Naive thymus-derived CD4-positive, alpha-beta T cell (primary cell): ENCODE measurements at regions of chr15 and their contacts with region 1.

Region 1: DNA sequence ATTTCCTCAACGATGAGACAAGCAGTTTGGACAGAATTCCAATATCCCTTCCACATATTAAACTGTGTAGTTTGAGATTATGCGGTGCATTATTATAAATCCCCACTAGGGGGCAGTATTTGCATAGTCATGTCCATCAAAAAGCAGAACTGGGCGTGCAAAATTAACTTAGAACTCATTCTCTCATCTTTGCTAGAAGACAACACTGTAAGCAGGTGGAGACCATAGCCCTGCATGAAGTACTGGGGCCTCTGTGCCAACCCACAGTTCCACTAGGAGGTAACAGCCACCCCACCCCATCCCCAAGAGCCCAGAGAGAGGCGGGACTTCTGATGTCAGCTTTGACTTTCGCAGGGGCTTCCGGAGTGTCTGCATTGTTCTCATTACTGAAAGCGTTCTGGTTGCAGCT is 106.6 kb upstream of the TMC3 start:
- DNase-seq: peak in 8 of 9 donors; percentile 10 to 62 (median 48)
- ATAC-seq: peak; percentile 76
- H3K4me3 ChIP-seq: no peak overlapping the region
- H3K4me3 Mint-ChIP-seq: peak overlapping the region in 5 of 10 donors; percentile 21 to 66 (median 53)
- H3K27ac ChIP-seq: no peak overlapping the region
- H3K27ac Mint-ChIP-seq: no peak overlapping the region
- H3K4me1 ChIP-seq: no peaks in the 10 kb centered on the region
- H3K4me1 Mint-ChIP-seq: peaks cover 0 to 3% (median 0%) of the 10 kb centered on the region in 7 donors
- H3K27me3 ChIP-seq: no peaks in the 10 kb centered on the region
- H3K27me3 Mint-ChIP-seq: peaks cover 0 to 9% (median 0%) of the 10 kb centered on the region in 5 donors

Region 2: DNA sequence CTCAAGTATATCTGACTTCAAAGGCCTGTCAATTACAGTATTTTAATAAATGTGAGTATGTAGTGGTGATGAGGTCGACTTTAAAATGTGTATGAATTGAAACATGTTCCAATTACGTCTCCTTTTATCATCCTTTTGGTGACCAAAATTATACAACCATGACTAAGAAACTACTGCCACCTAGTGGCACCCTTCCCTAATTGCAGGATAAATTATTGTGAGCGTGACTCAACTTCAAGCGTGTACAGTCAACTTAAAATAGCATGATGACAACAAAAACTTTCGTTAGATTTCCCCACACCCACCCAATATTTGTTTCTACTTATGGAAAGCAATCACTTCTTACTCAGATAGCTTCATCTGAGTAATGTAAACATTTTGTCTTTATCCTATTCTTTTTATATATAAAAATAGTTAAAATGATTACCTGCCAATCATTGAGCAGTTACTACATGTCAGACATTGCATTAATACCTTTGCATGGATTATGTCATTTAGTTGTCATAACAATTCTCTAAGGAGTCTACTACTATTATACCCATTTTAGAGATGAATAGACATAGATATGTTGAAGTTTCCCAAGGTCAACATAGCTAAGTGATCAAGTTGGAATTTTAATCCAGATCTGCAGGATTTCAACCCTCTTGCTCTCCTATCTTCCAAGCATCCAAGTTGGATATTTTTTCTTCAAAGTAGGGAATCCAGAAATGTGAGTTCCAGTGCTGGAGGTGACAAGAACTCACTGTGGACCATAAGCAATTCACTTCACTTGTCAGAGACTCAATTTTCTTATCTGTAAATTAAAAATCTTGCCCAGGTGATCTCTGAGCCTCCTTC is 459.2 kb after region 1 on chr15:
- CTCF ChIA-PET with region 1: no interaction called
- POLR2A ChIA-PET with region 1: no interaction called
- intact Hi-C with region 1: loop called in 1 of 2 experiments (anchors 2 kb)
- DNase-seq: peak in 3 of 9 donors; percentile 2 to 4 (median 2)
- ATAC-seq: no peak
- H3K4me3 ChIP-seq: no peak overlapping the region
- H3K4me3 Mint-ChIP-seq: no peak overlapping the region
- H3K27ac ChIP-seq: no peak overlapping the region
- H3K27ac Mint-ChIP-seq: no peak overlapping the region
- H3K4me1 ChIP-seq: no peaks in the 10 kb centered on the region
- H3K4me1 Mint-ChIP-seq: no peaks in the 10 kb centered on the region
- H3K27me3 ChIP-seq: no peaks in the 10 kb centered on the region
- H3K27me3 Mint-ChIP-seq: peaks cover 5 to 40% (median 28%) of the 10 kb centered on the region in 5 donors

Region 3: DNA sequence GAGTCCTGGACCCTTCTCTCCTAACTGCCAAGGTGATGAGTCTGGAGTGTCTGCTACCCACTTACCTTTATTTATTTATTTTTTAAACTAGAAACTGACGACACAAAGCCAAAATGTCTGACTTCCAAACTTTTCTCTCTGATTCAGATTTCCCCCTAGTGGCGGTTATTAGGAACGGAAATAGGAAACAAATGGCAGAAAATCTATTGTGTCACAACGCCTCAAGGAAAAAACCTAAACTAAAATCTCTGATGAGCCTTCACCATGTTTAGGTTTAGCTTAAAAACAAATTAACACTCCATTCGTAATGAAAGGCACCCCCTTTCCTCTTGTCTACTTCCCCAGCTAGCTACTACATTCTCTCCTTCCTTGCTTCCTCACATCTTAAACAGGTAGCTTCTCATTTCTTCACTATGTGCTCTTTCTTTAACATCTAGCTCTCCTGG is 659.2 kb after region 1 on chr15:
- CTCF ChIA-PET with region 1: interaction called, 4 read pairs
- POLR2A ChIA-PET with region 1: no interaction called
- intact Hi-C with region 1: loop called in 1 of 2 experiments (anchors 1 kb)
- DNase-seq: peak in 5 of 9 donors; percentile 16 to 45 (median 23)
- ATAC-seq: no peak
- H3K4me3 ChIP-seq: no peak overlapping the region
- H3K4me3 Mint-ChIP-seq: peak overlapping the region in 1 of 10 donors; percentile 10
- H3K27ac ChIP-seq: no peak overlapping the region
- H3K27ac Mint-ChIP-seq: peak overlapping the region in 2 of 9 donors; percentile 18 to 19
- H3K4me1 ChIP-seq: no peaks in the 10 kb centered on the region
- H3K4me1 Mint-ChIP-seq: peaks cover 0 to 14% (median 6%) of the 10 kb centered on the region in 7 donors
- H3K27me3 ChIP-seq: no peaks in the 10 kb centered on the region
- H3K27me3 Mint-ChIP-seq: no peaks in the 10 kb centered on the region

Region 4: DNA sequence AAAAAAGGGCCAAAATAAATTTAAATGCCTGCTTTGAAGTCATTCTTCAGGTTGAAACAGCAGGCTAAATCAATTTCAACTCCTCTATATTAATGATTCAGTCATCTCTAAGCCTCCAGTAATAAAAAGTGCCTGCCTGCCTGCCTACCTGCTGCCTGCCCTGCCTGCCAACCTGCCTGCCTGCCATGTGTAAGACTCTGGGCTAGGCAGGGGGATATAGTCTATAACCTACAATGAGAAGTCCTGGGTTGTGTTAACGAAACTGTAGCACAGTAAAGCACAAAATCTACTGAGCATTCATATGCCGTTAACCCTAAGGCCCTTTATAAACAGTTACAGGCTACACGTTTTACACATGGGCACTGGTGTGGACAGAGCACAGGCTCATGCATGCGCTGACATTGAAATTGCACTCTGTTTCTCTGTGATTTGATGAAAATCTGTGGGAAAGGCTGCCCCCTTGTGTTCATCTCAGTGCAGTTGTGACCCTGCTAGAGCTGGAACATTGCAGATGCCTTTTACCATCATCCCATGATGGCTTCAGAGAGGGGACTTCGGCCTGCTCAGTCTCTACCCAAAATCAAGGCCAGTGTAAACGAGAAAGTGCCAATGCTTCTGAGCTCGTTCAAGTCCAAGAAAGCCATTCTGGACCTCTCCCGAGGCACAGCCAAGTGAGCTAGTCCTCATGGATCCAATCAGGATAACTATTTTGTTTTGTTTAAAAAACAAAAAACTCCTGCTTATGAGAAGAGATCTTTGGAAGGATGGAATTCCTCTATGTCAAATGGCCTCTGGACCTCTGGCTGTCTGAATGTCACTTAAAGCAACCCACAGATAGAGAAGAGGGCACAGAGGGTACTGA is 717.3 kb after region 1 on chr15:
- CTCF ChIA-PET with region 1: interaction called, 6 read pairs
- POLR2A ChIA-PET with region 1: no interaction called
- intact Hi-C with region 1: loop called in 1 of 2 experiments (anchors 2 kb)
- DNase-seq: peak; percentile 6 to 61 (median 46)
- ATAC-seq: peak; percentile 81
- H3K4me3 ChIP-seq: no peak overlapping the region
- H3K4me3 Mint-ChIP-seq: no peak overlapping the region
- H3K27ac ChIP-seq: no peak overlapping the region
- H3K27ac Mint-ChIP-seq: peak overlapping the region in 1 of 9 donors; percentile 12
- H3K4me1 ChIP-seq: no peaks in the 10 kb centered on the region
- H3K4me1 Mint-ChIP-seq: peaks cover 0 to 6% (median 3%) of the 10 kb centered on the region in 7 donors
- H3K27me3 ChIP-seq: no peaks in the 10 kb centered on the region
- H3K27me3 Mint-ChIP-seq: no peaks in the 10 kb centered on the region